Activated B cell treated with CpG ODN at 0.5 μM for 24 hours (primary cell): ENCODE measurements at regions of chr6 and their contacts with region 1.

Region 1: GRCh38 chr6:152184917-152185574 is 377.6 kb downstream of the ESR1 start:
- DNase-seq: no peak
- ATAC-seq: peak; percentile 63
- H3K4me3 Mint-ChIP-seq: peak overlapping the region; percentile 90
- H3K27ac Mint-ChIP-seq: peak overlapping the region; percentile 99
- H3K4me1 Mint-ChIP-seq: peaks cover 65% of the 10 kb centered on the region
- H3K27me3 Mint-ChIP-seq: no peaks in the 10 kb centered on the region
- CTCF ChIP-seq: no peak

Region 2: DNA sequence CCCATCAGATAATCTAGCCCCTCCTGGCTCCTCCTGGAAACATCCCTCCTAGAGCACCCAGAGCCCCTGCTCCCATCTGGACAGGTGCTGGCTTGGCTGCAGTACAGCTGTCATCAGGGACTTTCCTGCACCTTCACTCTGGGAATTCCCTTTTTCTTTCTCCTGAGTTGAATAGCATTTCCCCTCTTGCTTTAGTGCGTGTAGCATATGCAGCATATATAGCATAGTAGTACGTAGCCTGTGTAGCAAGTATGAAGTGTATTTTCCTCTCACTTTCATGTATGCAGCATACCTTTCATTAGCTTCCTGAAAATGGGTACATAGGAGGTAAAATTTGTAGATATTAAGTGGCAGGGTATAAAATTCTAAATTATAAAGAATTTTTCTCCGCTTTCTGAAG is 24.7 kb before region 1 on chr6:
- CTCF ChIA-PET with region 1: interaction called, 4 read pairs
- POLR2A ChIA-PET with region 1: interaction called, 10 read pairs
- intact Hi-C with region 1: no loop called
- DNase-seq: no peak
- ATAC-seq: peak; percentile 97
- H3K4me3 Mint-ChIP-seq: peak overlapping the region; percentile 42
- H3K27ac Mint-ChIP-seq: peak overlapping the region; percentile 94
- H3K4me1 Mint-ChIP-seq: peaks cover 23% of the 10 kb centered on the region
- H3K27me3 Mint-ChIP-seq: no peaks in the 10 kb centered on the region
- CTCF ChIP-seq: no peak

Region 3: DNA sequence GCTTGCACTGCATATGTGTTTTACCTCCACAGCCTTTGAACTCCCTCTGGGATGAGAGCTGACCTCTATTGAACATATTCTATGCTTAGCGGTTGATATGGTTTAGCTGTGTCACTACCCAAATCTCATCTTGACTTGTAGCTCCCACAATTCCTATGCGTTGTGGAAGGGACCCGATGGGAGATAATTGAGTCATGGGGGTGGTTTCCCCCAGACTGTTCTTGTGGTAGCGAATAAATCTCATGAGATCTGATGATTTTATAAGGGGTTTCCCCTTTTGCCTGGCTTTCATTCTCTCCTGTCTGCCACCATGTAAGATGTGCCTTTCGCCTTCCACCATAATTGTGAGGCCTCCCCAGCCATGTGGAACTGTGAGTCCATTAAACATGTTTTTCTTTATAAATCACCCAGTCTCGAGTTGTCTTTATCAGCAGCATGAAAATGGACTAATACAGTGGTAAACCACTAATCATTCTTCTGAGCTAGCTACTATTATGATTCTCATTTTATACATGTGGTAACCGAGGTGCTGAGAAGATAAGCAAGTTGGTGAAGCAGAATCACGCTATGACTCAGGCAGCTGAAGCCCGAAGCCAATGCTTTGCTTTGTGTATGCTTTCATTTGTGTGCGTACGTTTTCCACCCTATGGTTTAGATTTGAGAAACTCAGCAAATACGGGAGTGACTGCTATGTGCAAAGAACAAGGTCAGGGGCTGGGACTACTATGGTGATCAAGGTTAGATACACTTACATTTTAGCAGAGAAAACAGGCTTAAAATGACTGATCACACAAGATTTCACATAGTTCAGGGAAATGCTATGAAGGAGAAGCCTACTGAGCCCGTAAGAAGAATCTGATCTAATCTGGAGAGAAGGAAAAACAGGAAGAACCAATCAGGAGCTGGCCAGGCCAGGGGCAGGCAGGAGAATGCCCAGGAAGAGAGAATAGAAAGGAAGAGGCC is 14.1 kb before region 1 on chr6:
- CTCF ChIA-PET with region 1: no interaction called
- POLR2A ChIA-PET with region 1: interaction called, 26 read pairs
- intact Hi-C with region 1: loop called (anchors 1 kb)
- DNase-seq: no peak
- ATAC-seq: peak; percentile 81
- H3K4me3 Mint-ChIP-seq: peak overlapping the region; percentile 61
- H3K27ac Mint-ChIP-seq: peak overlapping the region; percentile 93
- H3K4me1 Mint-ChIP-seq: peaks cover 38% of the 10 kb centered on the region
- H3K27me3 Mint-ChIP-seq: no peaks in the 10 kb centered on the region
- CTCF ChIP-seq: no peak

Region 4: GRCh38 chr6:152316024-152316423 is 131.0 kb after region 1 on chr6:
- CTCF ChIA-PET with region 1: no interaction called
- POLR2A ChIA-PET with region 1: no interaction called
- intact Hi-C with region 1: no loop called
- DNase-seq: no peak
- ATAC-seq: no peak
- H3K4me3 Mint-ChIP-seq: no peak overlapping the region
- H3K27ac Mint-ChIP-seq: no peak overlapping the region
- H3K4me1 Mint-ChIP-seq: peaks cover 9% of the 10 kb centered on the region
- H3K27me3 Mint-ChIP-seq: peaks cover 3% of the 10 kb centered on the region
- CTCF ChIP-seq: no peak

Region 5: DNA sequence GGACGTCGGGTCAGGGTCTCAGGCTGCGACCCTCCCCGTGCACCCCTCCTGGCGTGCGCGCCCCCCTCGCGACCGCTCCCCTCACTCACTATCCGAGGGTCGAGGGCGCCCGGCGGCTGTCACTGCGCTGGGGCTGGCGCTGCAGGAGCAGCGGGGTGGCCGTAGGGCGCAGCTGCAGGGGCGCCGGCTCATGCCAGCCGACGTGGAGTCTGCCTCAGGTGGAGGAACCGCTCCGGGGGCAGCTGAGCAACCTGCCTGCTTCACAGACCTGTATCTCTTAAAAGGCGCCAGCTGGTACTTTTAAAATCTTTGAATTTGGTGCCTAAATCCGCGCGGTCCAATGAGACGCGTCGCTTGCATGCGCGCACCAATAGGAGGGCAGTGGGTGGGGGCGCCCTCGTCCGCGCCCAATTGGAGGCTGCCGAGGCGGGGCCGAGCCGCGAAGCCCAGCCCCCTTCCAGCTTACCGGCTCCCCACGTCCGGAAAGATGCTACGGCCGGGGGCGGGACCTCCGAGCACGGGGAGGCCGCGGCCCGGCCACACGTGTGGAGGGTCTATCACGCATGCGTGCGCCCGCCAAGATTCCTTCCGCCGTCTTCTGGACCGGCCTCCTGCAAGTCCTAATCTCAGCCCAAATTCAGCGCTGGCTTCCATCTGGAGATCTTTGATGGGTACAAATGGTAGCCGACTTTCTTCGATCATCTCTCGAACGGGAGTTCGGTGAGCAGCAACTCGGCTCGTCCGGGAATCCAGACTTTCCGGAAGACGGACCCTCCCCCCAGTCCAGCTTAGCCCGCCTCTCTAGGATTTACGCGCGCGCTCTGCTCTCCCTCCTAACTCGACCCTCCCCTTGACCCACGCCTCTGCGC is 798.0 kb after region 1 on chr6 and contains the start of gene FBXO5:
- CTCF ChIA-PET with region 1: no interaction called
- POLR2A ChIA-PET with region 1: no interaction called
- intact Hi-C with region 1: loop called (anchors 10 kb)
- DNase-seq: peak; percentile 95
- ATAC-seq: peak; percentile 92
- H3K4me3 Mint-ChIP-seq: peak within 1 kb of the TSS; percentile 100
- H3K27ac Mint-ChIP-seq: peak within 1 kb of the TSS; percentile 100
- H3K4me1 Mint-ChIP-seq: peaks cover 41% of the 10 kb centered on the region
- H3K27me3 Mint-ChIP-seq: no peaks in the 10 kb centered on the region
- CTCF ChIP-seq: no peak
- total RNA-seq, gene FBXO5: 11.9 and 13.3 TPM in 2 replicates